ENCODE measurements at regions of chr16 and their contacts with region 1.

Region 1: GRCh38 chr16:57091975-57092785 is at the start of gene CPNE2:
- DNase-seq: peak in 2 of 9 experiments; percentile 20 to 50
- ATAC-seq: peak; percentile 57
- H3K4me3 ChIP-seq: peak within 1 kb of the TSS; percentile 31 to 49
- H3K4me3 Mint-ChIP-seq: peak within 1 kb of the TSS; percentile 79
- H3K27ac ChIP-seq: no peak within 1 kb of the TSS
- H3K27ac Mint-ChIP-seq: peak within 1 kb of the TSS; percentile 13
- H3K4me1 ChIP-seq: peaks cover 14% of the 10 kb centered on the region
- H3K4me1 Mint-ChIP-seq: peaks cover 14% of the 10 kb centered on the region
- H3K27me3 ChIP-seq: peaks cover 0 to 5% of the 10 kb centered on the region in 2 experiments
- H3K27me3 Mint-ChIP-seq: no peaks in the 10 kb centered on the region
- CTCF ChIP-seq: no peak
- total RNA-seq, gene CPNE2: 5.7 to 6.8 TPM

Region 2: GRCh38 chr16:57106767-57107166 is 14.6 kb after region 1 on chr16:
- CTCF ChIA-PET with region 1: interaction called, 13 read pairs
- POLR2A ChIA-PET with region 1: interaction called, 5 read pairs
- intact Hi-C with region 1: no loop called
- DNase-seq: no peak
- ATAC-seq: no peak
- H3K4me3 ChIP-seq: no peak overlapping the region
- H3K4me3 Mint-ChIP-seq: no peak overlapping the region
- H3K27ac ChIP-seq: no peak overlapping the region
- H3K27ac Mint-ChIP-seq: no peak overlapping the region
- H3K4me1 ChIP-seq: peaks cover 5% of the 10 kb centered on the region
- H3K4me1 Mint-ChIP-seq: peaks cover 11% of the 10 kb centered on the region
- H3K27me3 ChIP-seq: no peaks in the 10 kb centered on the region
- H3K27me3 Mint-ChIP-seq: no peaks in the 10 kb centered on the region
- CTCF ChIP-seq: no peak

Region 3: DNA sequence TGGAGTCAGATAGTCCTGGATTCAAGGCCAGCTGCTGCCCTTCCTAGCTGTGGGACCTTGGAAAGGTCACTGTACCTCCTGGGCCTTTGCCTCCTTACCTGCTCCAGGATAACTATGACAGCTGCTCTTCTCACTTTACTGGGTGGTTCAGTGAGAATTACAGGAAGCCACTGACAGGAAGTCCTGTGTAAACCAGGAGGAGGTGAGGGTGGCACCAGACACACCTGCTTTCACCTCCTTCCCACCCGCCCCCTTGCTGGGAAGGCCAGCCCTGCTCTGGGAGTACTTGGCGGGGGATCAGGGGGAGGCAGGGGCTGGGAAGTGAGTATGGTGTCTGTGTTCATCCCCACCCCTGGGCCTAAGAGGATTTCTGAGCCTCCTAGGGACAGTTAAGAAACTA is 42.8 kb after region 1 on chr16:
- CTCF ChIA-PET with region 1: interaction called, 7 read pairs
- POLR2A ChIA-PET with region 1: interaction called, 3 read pairs
- intact Hi-C with region 1: loop called in 1 of 2 experiments (anchors 2 kb)
- DNase-seq: peak in 8 of 9 experiments; percentile 22 to 76 (median 48)
- ATAC-seq: peak; percentile 65
- H3K4me3 ChIP-seq: peak overlapping the region; percentile 48 to 55
- H3K4me3 Mint-ChIP-seq: peak overlapping the region; percentile 82
- H3K27ac ChIP-seq: peak overlapping the region; percentile 34 to 82
- H3K27ac Mint-ChIP-seq: peak overlapping the region; percentile 97
- H3K4me1 ChIP-seq: peaks cover 71% of the 10 kb centered on the region
- H3K4me1 Mint-ChIP-seq: peaks cover 89% of the 10 kb centered on the region
- H3K27me3 ChIP-seq: no peaks in the 10 kb centered on the region
- H3K27me3 Mint-ChIP-seq: no peaks in the 10 kb centered on the region
- CTCF ChIP-seq: no peak

Region 4: DNA sequence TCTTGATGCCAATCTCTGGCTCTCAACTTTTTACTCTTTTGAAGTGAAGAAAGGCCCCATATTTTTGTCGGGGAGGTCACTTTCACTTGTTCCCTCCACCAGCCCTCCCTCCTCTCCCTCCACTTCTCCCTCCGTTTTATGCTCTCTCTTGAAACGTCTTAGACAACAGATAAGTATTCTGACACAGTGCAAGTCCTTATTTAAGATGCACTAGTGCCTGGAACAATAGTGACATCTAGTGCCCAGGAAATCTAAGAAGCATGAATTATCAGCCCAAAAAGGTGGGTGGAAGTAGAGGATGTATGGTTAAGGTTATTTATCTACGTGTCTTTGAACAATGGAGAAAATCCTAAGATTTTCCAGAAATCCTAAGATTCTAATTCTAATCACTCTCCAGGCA is 75.8 kb after region 1 on chr16:
- CTCF ChIA-PET with region 1: interaction called, 91 read pairs
- POLR2A ChIA-PET with region 1: no interaction called
- intact Hi-C with region 1: loop called (anchors 1 to 2 kb)
- DNase-seq: peak in 3 of 9 experiments; percentile 21 to 85 (median 76)
- ATAC-seq: peak; percentile 99
- H3K4me3 ChIP-seq: no peak overlapping the region
- H3K4me3 Mint-ChIP-seq: no peak overlapping the region
- H3K27ac ChIP-seq: no peak overlapping the region
- H3K27ac Mint-ChIP-seq: no peak overlapping the region
- H3K4me1 ChIP-seq: no peaks in the 10 kb centered on the region
- H3K4me1 Mint-ChIP-seq: peaks cover 9% of the 10 kb centered on the region
- H3K27me3 ChIP-seq: no peaks in the 10 kb centered on the region
- H3K27me3 Mint-ChIP-seq: no peaks in the 10 kb centered on the region
- CTCF ChIP-seq: peak; percentile 70

Measured in CD8-positive, alpha-beta T cell (primary cell).